ENCODE measurements at regions of chr7 and their contacts with region 1.

Region 1: GRCh38 chr7:79806161-79806734 is 328.4 kb upstream of the GNAI1 start:
- DNase-seq: no peak
- ATAC-seq: no peak
- H3K4me3 ChIP-seq: no peak overlapping the region
- H3K27ac ChIP-seq: no peak overlapping the region
- H3K4me1 ChIP-seq: no peaks in the 10 kb centered on the region
- H3K27me3 ChIP-seq: no peaks in the 10 kb centered on the region
- CTCF ChIP-seq: peak; percentile 55; the same call in 1 of the 2 replicates

Region 2: GRCh38 chr7:79778786-79779770 is 27.2 kb before region 1 on chr7:
- CTCF ChIA-PET with region 1: no interaction called
- POLR2A ChIA-PET with region 1: no interaction called
- in situ Hi-C with region 1: no loop called
- intact Hi-C with region 1: no loop called
- DNase-seq: no peak
- ATAC-seq: no peak
- H3K4me3 ChIP-seq: no peak overlapping the region
- H3K27ac ChIP-seq: no peak overlapping the region
- H3K4me1 ChIP-seq: no peaks in the 10 kb centered on the region
- H3K27me3 ChIP-seq: no peaks in the 10 kb centered on the region
- CTCF ChIP-seq: no peak

Region 3: GRCh38 chr7:80018941-80019752 is 212.9 kb after region 1 on chr7:
- CTCF ChIA-PET with region 1: no interaction called
- POLR2A ChIA-PET with region 1: no interaction called
- in situ Hi-C with region 1: no loop called
- intact Hi-C with region 1: loop called (anchors 10 kb)
- DNase-seq: peak; percentile 56
- ATAC-seq: peak; percentile 95
- H3K4me3 ChIP-seq: no peak overlapping the region
- H3K27ac ChIP-seq: peak overlapping the region; percentile 45; the same call in 1 of the 2 replicates
- H3K4me1 ChIP-seq: no peaks in the 10 kb centered on the region
- H3K27me3 ChIP-seq: no peaks in the 10 kb centered on the region
- CTCF ChIP-seq: peak; percentile 92

Region 4: DNA sequence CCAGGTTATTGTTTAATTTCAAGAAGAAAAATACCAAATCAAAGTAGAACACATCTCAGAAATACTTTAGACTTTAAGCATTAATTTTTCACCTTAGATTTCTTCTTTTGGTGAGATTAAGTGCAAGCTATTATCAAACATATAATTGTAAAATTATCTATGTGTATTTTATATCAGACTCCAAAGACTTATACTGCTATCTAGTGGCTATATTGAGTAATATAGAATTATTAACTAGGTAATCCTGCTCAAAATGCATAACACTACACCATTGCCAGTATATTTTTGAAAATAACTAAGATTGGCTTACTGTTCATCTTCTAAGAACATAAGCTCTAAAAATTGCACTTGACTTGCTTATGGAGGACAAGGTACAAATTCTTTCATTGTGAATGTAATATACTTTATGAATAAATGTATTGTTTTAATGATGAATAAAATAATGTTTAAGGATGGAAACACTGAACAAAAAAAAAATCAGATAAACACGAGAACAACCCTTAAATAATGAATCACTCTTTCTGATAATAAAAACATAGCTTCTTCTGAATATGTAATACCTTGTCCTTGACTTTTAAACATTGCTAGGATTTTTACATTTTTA is 241.7 kb after region 1 on chr7:
- CTCF ChIA-PET with region 1: no interaction called
- POLR2A ChIA-PET with region 1: no interaction called
- in situ Hi-C with region 1: no loop called
- intact Hi-C with region 1: loop called (anchors 10 kb)
- DNase-seq: no peak
- ATAC-seq: no peak
- H3K4me3 ChIP-seq: no peak overlapping the region
- H3K27ac ChIP-seq: no peak overlapping the region; the same call in 1 of the 2 replicates
- H3K4me1 ChIP-seq: peaks cover 6% of the 10 kb centered on the region; the same call in 1 of the 2 replicates
- H3K27me3 ChIP-seq: no peaks in the 10 kb centered on the region
- CTCF ChIP-seq: peak; percentile 23; the same call in 1 of the 2 replicates

Region 5: DNA sequence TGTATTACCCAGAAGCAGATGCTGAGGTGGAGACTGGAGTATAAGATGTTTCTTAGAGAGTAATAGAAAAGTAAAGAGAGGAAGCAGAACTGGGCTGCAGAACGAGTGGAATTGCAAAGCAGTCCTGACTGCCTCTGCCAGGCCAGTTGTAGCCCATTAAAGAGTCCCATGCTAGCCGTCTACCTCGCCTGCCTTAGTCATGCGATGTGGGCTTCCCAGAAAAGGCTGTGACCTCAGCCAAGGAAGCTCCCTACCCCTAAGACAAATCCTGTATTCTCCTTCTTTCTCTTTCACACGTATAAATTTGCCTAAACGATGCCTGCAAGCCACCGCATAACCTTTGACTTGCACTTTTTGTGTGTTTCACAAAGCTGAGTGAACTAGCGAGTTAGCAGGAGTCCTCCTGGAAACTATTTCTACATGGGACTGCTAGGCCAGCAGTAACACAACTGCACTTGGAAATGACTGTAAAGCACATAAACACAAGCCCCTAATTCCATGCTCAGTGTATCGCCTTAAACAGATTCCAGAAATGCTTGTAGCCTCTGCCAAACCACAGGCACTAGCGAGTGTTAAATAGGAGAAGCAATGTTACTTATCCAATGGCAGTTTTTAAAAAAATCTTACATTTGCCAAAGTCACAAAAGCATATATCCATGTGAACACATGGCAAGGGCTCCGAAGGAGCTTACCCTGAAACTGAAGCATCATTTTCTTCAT is 281.0 kb after region 1 on chr7:
- CTCF ChIA-PET with region 1: no interaction called
- POLR2A ChIA-PET with region 1: no interaction called
- in situ Hi-C with region 1: no loop called
- intact Hi-C with region 1: no loop called
- DNase-seq: no peak
- ATAC-seq: peak; percentile 63
- H3K4me3 ChIP-seq: no peak overlapping the region
- H3K27ac ChIP-seq: no peak overlapping the region
- H3K4me1 ChIP-seq: peaks cover 3% of the 10 kb centered on the region; the same call in 1 of the 2 replicates
- H3K27me3 ChIP-seq: 0 out of 2 replicates have a peak, but pooled peaks cover 2% of the 10 kb centered on the region
- CTCF ChIP-seq: no peak